ENCODE measurements at regions of chr1 and their contacts with region 1.

Region 1: DNA sequence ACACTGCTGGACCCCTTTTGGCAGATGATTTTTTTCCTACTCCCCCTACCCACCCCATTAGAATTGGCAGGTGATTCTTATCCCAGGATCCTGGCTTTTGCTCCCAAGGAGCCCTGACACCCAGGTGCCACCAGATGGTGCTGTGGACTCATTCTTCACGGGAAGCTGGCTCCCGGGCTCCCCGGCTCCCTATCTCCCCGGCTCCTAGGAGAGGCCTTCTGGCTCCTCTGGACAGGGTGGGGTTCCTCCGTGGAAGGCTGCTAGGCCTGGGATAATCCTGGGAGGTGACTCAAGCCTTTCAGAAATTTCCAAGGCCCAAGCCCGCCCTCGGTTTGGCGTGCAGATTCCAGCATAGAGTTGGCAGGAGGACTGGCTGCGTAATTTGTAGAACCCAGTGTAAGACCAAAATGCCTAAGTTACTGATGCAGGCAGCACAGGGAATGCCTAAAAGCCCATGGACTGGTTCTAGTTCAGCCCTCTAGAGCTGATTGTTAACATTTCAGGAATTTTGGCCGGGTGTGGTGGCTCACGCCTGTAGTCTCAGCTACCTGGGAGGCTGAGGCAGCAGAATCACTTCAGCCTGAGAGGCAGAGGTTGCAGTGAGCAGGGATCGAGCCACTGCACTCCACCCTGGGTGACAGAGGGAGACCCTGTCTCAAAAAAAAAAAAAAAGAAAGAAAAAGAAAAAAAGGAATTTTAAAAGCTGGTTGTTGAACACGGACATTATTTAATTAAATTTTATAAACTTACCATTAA is 6.8 kb upstream of the BSDC1 start:
- ATAC-seq: peak; percentile 97 to 99 (median 98)
- H3K4me3 ChIP-seq: no peak overlapping the region
- H3K27ac ChIP-seq: no peak overlapping the region
- H3K4me1 ChIP-seq: peaks cover under 1 to 2% of the 10 kb centered on the region in 2 donors

Region 2: GRCh38 chr1:32501865-32502264 is 100.8 kb after region 1 on chr1:
- in situ Hi-C with region 1: no loop called
- ATAC-seq: no peak
- H3K4me3 ChIP-seq: no peak overlapping the region
- H3K27ac ChIP-seq: no peak overlapping the region
- H3K4me1 ChIP-seq: no peaks in the 10 kb centered on the region

Region 3: GRCh38 chr1:32786856-32787255 is 385.8 kb after region 1 on chr1:
- in situ Hi-C with region 1: loop called in 1 of 9 experiments (anchors 25 kb)
- ATAC-seq: peak in 2 of 8 experiments; percentile 27 to 38
- H3K4me3 ChIP-seq: no peak overlapping the region
- H3K27ac ChIP-seq: no peak overlapping the region
- H3K4me1 ChIP-seq: no peaks in the 10 kb centered on the region

Region 4: DNA sequence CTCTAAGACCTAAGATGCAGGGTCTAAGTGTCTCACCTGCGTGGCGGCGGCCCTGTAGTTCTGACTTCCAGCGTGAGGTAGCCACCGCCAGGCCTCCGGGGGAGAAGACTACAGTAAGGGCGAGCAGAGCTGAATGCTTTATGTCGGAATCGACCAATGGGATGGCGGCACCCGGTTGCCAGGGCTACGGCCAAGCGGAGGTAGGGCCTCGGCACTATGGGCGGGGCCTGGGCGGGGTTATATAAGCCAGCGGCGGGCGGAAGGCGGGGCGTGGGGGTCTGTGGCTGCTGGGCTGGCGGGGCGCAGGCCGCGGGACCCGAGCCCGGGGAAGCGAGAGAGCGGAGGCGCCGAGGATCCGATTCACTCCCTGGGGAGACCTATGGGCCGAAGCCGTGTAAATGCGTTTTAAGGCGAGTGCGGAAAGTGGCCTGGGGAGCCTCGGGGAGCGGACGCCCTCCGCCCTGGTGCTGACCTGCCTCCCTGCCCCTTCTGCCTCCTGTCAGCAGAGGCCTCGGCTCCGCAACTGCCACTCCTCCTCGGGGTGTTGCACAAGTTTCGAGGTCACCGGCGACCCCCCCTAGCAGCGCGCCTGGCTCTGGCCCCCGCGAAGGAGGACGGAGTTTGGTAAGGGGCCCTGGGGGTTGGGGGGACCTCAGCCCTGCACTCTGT is 680.0 kb after region 1 on chr1 and contains the start of gene AZIN2:
- in situ Hi-C with region 1: loop called in 2 of 9 experiments (anchors 25 kb)
- ATAC-seq: peak; percentile 96 to 99 (median 98)
- H3K4me3 ChIP-seq: peak within 1 kb of the TSS; percentile 44 to 58 (median 52)
- H3K27ac ChIP-seq: no peak within 1 kb of the TSS
- H3K4me1 ChIP-seq: peaks cover 10 to 12% of the 10 kb centered on the region in 2 donors
- total RNA-seq, gene AZIN2: 4.7 to 15.5 (median 11.6) TPM